ENCODE measurements at regions of chr16 and their contacts with region 1.

Region 1: DNA sequence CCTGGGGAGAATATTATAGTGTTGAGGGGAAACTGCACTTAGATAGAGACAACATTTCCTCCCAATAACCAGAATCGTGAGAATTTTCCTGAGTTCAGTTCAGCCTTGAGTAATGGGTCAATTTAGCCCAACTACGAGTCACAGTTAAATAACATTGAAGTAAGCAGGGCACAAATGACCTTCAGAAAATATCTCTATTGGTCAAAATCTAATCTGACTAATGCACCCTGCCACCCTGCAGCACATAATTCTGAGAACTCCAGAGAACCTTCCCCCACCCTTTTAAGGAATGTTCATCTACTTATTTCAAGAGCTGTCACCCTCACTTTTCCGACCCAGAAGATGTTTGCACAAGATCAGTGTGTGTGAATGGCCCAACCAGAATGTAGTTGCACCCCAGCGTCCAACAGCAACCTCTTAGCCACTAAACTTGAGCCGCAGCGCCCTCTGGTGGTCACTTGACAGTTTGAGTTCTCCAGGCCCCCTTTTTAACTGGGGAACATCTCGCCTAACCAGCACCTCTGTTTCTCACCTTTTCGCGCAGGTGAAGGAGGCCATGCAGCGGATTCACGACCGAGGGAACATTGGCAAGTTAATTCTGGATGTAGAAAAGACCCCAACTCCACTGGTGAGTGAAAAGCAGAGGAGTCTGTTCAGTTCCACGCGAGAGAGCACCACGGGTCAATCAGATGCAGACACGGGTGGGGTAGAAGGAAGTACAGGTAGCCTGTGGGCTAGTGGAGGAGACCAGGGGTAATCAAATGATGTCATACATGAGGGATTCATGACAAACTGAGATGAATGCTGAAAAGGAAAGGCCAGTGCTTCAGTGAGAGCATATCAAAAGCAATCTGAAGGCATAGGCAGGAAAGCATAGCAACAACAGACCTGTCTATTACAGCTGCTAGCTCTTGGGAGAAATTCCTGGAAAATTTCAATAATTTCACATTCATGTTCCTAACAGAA is 50.8 kb upstream of the CLEC3A start:
- DNase-seq: no peak
- H3K4me3 ChIP-seq: no peak overlapping the region
- H3K27ac ChIP-seq: no peak overlapping the region
- H3K4me1 ChIP-seq: no peaks in the 10 kb centered on the region
- H3K27me3 ChIP-seq: peaks cover 0 to 9% (median 0%) of the 10 kb centered on the region in 4 donors
- CTCF ChIP-seq: peak; percentile 64 to 81 (median 74)
- POLR2A ChIP-seq: no peak

Region 2: DNA sequence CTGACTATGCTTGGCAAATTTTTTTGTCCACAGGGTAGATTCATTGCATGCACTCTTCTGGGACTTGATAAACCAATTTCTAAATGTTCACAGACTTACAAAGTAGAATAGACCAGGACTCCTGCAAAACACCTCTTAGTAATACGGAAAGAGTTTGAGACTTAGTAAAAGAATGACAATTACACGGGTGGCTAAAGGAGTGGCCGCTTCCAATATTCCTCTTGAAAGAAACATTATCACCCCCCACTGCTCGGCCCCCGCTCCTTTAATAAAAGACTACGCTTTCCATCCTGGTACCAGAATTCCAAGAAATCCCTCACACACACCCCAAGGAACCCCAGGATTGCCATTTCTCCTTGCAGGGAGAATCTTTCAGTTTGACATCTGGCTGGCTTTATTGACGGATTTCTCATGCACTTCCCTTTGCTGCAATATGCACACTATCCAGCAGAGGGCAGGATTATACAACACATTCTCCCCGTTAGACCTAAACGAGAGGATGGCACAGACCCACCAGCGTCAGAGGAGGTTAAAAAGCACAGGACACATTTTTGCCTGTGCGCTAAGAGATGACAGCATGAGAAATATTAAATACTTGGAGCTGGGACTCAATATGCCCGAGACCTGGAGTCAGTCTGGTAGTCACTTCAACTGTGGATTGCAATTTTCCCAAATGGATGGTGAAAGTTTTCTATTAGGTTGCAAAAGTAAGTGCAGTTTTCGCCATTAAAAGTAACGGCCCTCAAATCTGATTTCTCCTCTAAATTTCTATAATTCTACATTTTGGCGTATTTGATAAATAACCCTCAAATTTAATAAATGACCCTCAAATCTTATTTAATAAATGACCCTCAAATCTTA is 295.9 kb before region 1 on chr16:
- intact Hi-C with region 1: loop called (anchors 5 kb)
- DNase-seq: no peak
- H3K4me3 ChIP-seq: no peak overlapping the region
- H3K27ac ChIP-seq: no peak overlapping the region
- H3K4me1 ChIP-seq: no peaks in the 10 kb centered on the region
- H3K27me3 ChIP-seq: peaks cover 0 to 7% (median 0%) of the 10 kb centered on the region in 4 donors
- CTCF ChIP-seq: peak; percentile 75 to 92 (median 90)
- POLR2A ChIP-seq: no peak